ENCODE measurements at regions of chr11 and their contacts with region 1.

Region 1: DNA sequence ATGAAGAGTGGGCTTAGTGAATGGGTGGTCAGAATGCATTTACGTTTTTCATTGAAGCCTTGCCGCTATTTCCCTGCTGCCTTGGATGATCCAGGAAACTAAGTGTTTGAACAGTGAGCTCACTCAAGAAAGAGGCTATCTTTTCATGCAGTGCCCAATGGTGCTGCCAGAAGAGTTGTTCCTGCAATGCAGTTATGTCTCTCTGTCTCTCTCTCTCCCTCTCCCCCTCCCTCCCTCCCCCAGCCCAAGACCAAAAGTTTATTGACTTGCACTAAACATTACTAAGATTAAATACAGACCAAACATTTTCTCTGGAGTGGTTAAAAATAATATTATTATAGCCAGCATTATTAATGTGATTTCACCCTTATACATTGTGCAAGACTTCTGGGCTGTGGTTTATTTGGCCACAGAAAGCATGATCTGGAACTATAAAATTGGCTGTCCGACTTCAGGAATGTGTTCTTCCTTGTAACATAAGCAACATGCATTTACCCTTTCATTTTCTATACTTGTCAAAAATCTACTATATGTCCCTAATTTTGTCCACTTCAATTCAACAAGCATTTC is 6.6 kb upstream of the FUT4 start:
- DNase-seq: peak; percentile 67
- ATAC-seq: peak; percentile 85
- H3K4me3 ChIP-seq: peak overlapping the region; percentile 13; the same call in 1 of the 2 replicates
- H3K27ac ChIP-seq: peak overlapping the region; percentile 22; the same call in 1 of the 2 replicates
- H3K4me1 ChIP-seq: peaks cover 26% of the 10 kb centered on the region
- H3K27me3 ChIP-seq: no peaks in the 10 kb centered on the region
- CTCF ChIP-seq: no peak

Region 2: DNA sequence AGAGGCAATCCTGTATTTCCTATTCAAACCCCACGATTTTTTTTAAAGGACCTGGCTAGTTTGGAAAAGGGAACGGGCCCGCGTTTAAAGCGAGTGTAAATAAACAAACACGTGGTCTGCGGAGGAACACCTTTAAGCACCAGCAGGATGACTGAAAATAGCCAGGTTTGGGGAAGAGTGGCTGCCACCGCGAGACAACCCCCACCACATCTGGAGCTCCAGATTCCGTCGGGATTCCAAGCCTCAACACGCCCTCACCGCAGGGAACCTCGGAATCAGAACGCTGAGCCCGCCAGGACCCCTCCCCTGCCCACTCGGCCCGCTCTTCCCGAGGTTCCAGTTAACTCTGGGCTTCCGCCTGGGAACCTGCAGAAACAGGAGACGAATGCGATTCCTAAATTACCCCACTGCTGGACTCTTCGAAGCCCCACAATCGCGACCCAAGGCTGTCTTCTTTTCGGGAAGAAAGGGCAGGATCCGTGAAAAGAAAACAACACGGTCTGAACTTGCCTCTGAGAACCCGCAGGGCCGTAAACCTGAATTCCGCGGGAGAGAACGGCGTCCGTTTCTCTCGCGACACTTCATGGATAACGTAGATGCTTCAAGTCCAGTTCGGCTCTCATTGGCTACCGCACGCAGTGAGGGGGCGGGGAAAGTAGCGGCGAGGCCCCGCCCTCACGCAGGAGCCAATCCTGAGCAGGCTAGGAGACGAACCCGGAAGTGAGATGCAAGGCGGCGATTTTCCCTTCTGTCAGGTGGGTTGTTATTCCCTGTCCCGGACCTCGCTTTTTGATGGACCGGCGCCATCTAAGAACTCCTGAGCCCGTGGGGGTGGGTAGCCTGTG is 43.6 kb before region 1 on chr11 and contains the starts of genes ANKRD49 and MRE11:
- CTCF ChIA-PET with region 1: no interaction called
- POLR2A ChIA-PET with region 1: no interaction called
- intact Hi-C with region 1: no loop called
- DNase-seq: peak; percentile 100
- ATAC-seq: peak; percentile 99
- H3K4me3 ChIP-seq: peak within 1 kb of the TSS; percentile 79
- H3K27ac ChIP-seq: peak within 1 kb of the TSS; percentile 60
- H3K4me1 ChIP-seq: peaks cover 25% of the 10 kb centered on the region
- H3K27me3 ChIP-seq: no peaks in the 10 kb centered on the region
- CTCF ChIP-seq: no peak
- total RNA-seq, gene ANKRD49: 6.9 and 9.0 TPM in 2 replicates
- total RNA-seq, gene MRE11: 19.0 and 20.1 TPM in 2 replicates

Region 3: DNA sequence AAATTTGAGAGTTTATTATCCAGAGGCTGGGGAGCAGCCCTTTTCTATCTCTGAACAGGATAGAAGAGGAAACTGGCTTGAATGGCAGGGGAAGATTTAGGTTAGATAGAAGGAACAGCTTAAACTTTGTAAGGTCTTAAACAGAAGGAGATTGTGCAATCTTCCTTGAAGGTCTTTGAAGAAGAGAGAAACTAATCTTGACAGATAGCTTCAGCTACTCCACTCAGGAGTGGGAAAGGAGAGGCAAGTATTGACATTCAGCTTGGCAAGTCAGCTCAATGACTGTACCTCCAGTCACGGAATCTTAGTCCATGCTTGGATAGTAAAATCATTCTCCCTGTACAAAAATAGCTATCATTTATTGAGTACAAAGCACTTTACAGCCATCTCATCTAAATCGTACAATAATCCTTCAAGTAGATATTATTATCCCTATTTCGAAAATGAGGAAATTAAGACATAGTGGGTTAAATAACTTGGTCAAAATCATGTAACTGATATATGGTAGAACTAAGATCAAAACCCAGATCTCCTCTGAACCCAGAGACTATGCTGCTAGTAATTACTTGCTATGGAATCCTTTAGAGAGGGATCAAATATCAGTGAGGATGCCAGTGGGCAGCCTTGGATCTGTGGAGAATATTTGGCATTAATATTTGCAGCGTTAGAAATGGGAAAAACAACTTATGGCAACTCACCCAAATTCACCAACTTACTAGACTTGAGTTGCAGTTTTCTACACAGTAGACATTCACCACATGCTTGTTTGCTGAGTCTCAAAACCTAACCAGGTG is 10.3 kb before region 1 on chr11:
- CTCF ChIA-PET with region 1: interaction called, 4 read pairs
- POLR2A ChIA-PET with region 1: no interaction called
- intact Hi-C with region 1: loop called (anchors 1 kb)
- DNase-seq: no peak
- ATAC-seq: no peak
- H3K4me3 ChIP-seq: no peak overlapping the region
- H3K27ac ChIP-seq: no peak overlapping the region
- H3K4me1 ChIP-seq: no peaks in the 10 kb centered on the region
- H3K27me3 ChIP-seq: no peaks in the 10 kb centered on the region
- CTCF ChIP-seq: no peak

Region 4: DNA sequence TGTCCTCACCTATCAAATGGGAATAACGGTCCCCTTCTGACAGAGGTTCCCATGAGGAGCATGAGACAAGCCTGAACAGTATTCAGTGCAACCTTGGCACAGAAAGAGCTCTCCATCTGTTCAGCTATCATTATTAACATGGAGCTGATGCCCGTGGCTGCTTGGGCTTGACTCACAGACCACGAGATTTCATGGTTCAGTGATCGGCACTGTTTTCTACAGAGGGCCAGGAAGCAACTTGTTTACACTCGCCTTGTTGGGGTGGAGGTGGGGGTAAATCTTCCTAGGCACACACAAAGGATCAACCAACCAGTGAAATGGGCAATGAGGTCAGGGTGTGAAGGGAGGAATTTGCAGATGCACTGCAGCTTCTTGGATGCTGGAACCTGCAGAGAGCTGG is 348.0 kb after region 1 on chr11:
- CTCF ChIA-PET with region 1: no interaction called
- POLR2A ChIA-PET with region 1: no interaction called
- intact Hi-C with region 1: loop called (anchors 10 kb)
- DNase-seq: peak; percentile 96
- ATAC-seq: peak; percentile 83
- H3K4me3 ChIP-seq: no peak overlapping the region
- H3K27ac ChIP-seq: peak overlapping the region; percentile 38
- H3K4me1 ChIP-seq: peaks cover 33% of the 10 kb centered on the region
- H3K27me3 ChIP-seq: no peaks in the 10 kb centered on the region
- CTCF ChIP-seq: no peak

Measured in PC-3 (cell line).